Left cardiac atrium (tissue), 4 donors: ENCODE measurements at regions of chr20 and their contacts with region 1.

Region 1: DNA sequence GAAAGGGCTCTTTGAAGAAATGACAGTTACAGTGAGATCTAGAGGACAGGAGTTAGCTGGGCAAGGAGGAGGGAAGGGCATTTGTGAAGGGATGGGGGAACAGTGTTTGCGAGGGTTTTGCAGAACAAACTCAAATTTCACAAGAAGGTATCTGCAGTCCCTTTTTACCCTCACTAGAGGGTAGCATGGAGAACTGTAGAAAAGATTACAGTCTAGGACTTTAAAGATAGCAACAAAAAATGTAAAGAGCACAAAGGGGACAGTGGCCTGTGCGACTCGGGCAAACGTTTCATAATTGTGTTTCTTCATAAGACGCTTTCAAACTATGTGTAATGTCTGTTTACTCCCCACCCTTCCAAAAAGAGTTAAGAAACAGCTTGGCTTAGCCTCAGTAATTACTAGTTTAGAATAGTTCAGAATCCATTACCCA is 21.2 kb upstream of the ASXL1 start:
- DNase-seq: no peak
- ATAC-seq: peak in 1 of 2 donors; percentile 50

Region 2: GRCh38 chr20:32207626-32208498 is 129.1 kb before region 1 on chr20 and contains the starts of genes PLAGL2 and POFUT1:
- intact Hi-C with region 1: loop called in 1 of 2 experiments (anchors 10 kb)
- DNase-seq: peak; percentile 92
- ATAC-seq: peak; percentile 98 to 99
- total RNA-seq, gene PLAGL2: 6.9 to 8.0 TPM
- total RNA-seq, gene POFUT1: 25.5 to 28.6 TPM

Region 3: DNA sequence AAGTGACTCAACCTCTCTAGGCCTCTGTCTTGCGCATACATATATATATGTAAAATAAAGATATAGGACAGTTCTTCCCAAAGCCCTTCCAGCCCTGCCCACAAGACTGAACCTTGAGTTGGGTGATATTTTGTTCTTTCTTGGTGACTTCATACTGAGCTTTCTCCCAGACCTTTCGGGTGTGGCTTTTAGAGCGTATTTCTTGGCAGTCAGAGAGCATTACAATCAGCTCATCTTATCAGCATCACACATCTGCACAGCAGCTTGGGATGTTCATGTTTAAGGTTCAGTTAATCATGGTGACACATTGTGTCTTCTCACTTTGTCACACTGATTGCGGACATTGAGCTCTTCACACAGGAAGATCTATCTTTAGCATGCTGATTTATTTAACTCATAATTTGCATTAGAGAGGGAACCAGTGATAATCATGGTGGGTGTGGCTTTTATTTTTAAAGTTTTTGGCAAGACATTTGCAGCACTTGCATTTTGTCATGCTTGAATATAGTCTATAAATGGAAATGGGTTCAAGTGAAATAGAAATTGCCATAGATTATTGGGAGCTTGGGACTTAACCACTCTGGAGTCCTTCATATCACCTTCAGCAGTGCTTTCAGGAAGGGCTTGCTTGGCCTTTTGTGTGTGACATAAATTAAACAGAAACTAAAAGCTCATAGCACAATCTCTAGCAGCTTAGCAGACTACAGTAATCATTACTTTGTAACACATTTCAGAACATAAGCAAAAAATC is 51.1 kb before region 1 on chr20:
- intact Hi-C with region 1: loop called in 1 of 2 experiments (anchors 10 kb)
- DNase-seq: no peak
- ATAC-seq: peak; percentile 24 to 53